ENCODE measurements at regions of chr12 and their contacts with region 1.

Region 1: DNA sequence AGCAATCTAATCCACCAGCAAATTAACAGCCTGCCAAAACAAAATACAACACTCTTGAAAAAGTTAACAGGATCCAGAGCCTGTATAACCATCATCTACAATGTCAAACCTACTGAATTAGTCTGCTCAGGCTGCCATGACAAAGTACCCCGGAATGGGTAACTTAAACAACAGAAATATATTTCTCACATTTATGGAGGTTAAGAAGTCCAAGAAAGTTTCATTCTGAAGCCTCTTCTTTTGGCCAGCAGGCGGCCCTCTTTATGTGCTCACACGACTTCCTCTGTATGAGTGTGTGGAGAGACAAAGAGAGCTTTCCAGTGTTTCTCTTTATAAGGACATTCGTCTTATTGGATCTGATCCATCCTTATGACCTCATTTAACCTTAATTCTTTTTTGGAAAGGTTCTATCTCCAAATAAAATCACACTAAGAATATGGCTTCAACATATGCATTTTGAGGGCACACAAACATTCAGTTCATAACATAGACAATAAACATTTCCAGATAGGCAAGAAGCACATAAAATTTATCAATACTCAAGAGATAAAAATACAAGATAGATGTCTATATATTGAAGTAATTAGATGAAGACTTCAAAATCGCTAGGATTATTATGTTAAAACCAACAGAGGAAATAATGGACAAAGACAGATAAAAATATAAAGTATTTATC is 5.9 kb upstream of the RERG start:
- DNase-seq: peak; percentile 15 to 32
- ATAC-seq: no peak
- H3K4me3 ChIP-seq: no peak overlapping the region
- H3K27ac ChIP-seq: no peak overlapping the region
- H3K4me1 ChIP-seq: peaks cover 0 to 6% of the 10 kb centered on the region in 2 donors
- H3K27me3 ChIP-seq: no peaks in the 10 kb centered on the region
- CTCF ChIP-seq: peak; percentile 36 to 60 (median 44)
- POLR2A ChIP-seq: no peak

Region 2: DNA sequence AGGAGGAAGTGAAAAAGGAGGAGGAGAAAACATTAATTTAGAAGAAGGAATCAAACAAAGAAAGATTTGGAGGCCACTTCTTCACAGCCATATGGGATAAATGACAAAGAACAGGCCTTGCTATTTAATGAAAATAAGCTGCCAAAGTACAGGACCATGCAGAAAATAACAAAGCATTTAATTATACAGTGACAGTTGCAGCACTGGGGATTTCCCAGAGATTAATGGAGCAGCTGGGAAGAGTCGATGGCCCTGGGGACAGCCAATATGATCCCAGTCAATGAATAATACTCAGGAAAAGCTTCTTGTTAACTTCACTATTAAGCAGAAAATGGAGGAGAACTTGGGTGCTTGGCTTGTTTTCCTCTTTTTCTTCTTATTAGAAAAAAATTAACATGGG is 40.5 kb before region 1 on chr12:
- in situ Hi-C with region 1: no loop called
- intact Hi-C with region 1: no loop called
- DNase-seq: no peak
- ATAC-seq: no peak
- H3K4me3 ChIP-seq: no peak overlapping the region
- H3K27ac ChIP-seq: peak overlapping the region in 3 of 4 donors; percentile 16 to 29 (median 21)
- H3K4me1 ChIP-seq: peaks cover 0 to 7% of the 10 kb centered on the region in 2 donors
- H3K27me3 ChIP-seq: no peaks in the 10 kb centered on the region
- CTCF ChIP-seq: no peak
- POLR2A ChIP-seq: no peak

Region 3: GRCh38 chr12:15268927-15269552 is 41.9 kb after region 1 on chr12:
- in situ Hi-C with region 1: loop called in 3 of 4 experiments (anchors 5 kb)
- intact Hi-C with region 1: loop called (anchors 1 kb)
- DNase-seq: peak in 1 of 2 donors; percentile 31
- ATAC-seq: peak; percentile 56 to 60
- H3K4me3 ChIP-seq: no peak overlapping the region
- H3K27ac ChIP-seq: no peak overlapping the region
- H3K4me1 ChIP-seq: peaks cover 0 to 3% of the 10 kb centered on the region in 2 donors
- H3K27me3 ChIP-seq: no peaks in the 10 kb centered on the region
- CTCF ChIP-seq: peak; percentile 66 to 86 (median 75)
- POLR2A ChIP-seq: no peak